Panc1 (cell line): ENCODE measurements at regions of chr4 and their contacts with region 1.

Region 1: DNA sequence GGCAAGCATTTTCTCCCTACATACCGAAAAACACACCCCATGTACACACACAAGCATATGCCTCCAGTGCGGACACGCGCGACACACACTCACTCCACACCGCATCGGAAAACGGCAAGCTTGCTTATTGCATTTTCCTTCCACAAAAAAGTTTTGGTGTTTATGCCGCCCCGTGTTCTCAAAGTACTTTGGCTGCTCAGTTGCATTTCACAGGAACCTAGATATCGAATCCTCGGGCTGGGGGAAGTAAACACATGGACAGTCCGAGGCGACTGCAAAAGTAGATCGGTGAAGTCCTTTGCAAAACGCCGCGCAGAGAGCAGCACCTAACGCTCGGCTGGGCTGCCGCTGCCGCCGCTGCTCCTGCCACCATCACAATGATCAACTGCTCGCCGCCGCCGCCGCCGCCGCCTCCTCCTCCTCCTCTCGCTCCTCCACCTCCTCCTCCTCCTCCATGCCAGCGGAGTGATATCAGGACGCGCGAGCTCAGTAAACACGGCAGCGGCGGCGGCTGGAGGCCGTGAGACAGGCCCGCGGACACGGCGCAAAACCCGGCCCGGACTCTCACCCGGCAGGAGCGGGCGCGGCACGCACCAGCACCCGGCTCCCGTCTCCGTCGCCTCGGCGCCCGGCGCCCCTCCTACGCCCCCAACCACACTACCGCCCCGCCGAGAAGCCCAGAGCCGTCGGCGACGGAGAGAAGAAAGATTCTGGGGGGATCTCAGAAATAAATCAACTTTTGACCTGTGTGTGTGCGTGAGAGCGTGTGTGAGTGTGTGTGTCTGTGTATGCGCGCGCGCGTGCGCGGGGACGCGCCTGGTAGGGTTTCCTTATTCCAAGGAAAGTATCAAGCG is at the start of gene MAML3:
- DNase-seq: no peak
- ATAC-seq: peak; percentile 49
- H3K4me3 ChIP-seq: peak within 1 kb of the TSS; percentile 82 to 95
- H3K27ac ChIP-seq: peak within 1 kb of the TSS; percentile 89
- H3K4me1 ChIP-seq: peaks cover 12% of the 10 kb centered on the region
- H3K27me3 ChIP-seq: no peaks in the 10 kb centered on the region
- CTCF ChIP-seq: no peak
- total RNA-seq, gene MAML3: 7.7 TPM

Region 2: GRCh38 chr4:139934057-139934707 is 219.8 kb before region 1 on chr4:
- CTCF ChIA-PET with region 1: no interaction called
- POLR2A ChIA-PET with region 1: interaction called, 10 read pairs
- in situ Hi-C with region 1: no loop called
- intact Hi-C with region 1: no loop called
- DNase-seq: no peak
- ATAC-seq: no peak
- H3K4me3 ChIP-seq: no peak overlapping the region
- H3K27ac ChIP-seq: no peak overlapping the region
- H3K4me1 ChIP-seq: no peaks in the 10 kb centered on the region
- H3K27me3 ChIP-seq: no peaks in the 10 kb centered on the region
- CTCF ChIP-seq: no peak

Region 3: GRCh38 chr4:140031061-140031460 is 122.9 kb before region 1 on chr4:
- CTCF ChIA-PET with region 1: no interaction called
- POLR2A ChIA-PET with region 1: interaction called, 11 read pairs
- in situ Hi-C with region 1: no loop called
- intact Hi-C with region 1: no loop called
- DNase-seq: no peak
- ATAC-seq: no peak
- H3K4me3 ChIP-seq: no peak overlapping the region
- H3K27ac ChIP-seq: no peak overlapping the region
- H3K4me1 ChIP-seq: peaks cover 4% of the 10 kb centered on the region; the same call in 1 of the 2 replicates
- H3K27me3 ChIP-seq: no peaks in the 10 kb centered on the region
- CTCF ChIP-seq: no peak

Region 4: GRCh38 chr4:140095694-140096482 is 58.1 kb before region 1 on chr4:
- CTCF ChIA-PET with region 1: interaction called, 5 read pairs
- POLR2A ChIA-PET with region 1: interaction called, 28 read pairs
- in situ Hi-C with region 1: no loop called
- intact Hi-C with region 1: loop called (anchors 5 kb)
- DNase-seq: no peak
- ATAC-seq: peak; percentile 72
- H3K4me3 ChIP-seq: peak overlapping the region; percentile 18 to 51
- H3K27ac ChIP-seq: peak overlapping the region; percentile 96
- H3K4me1 ChIP-seq: peaks cover 61% of the 10 kb centered on the region
- H3K27me3 ChIP-seq: no peaks in the 10 kb centered on the region
- CTCF ChIP-seq: no peak

Region 5: DNA sequence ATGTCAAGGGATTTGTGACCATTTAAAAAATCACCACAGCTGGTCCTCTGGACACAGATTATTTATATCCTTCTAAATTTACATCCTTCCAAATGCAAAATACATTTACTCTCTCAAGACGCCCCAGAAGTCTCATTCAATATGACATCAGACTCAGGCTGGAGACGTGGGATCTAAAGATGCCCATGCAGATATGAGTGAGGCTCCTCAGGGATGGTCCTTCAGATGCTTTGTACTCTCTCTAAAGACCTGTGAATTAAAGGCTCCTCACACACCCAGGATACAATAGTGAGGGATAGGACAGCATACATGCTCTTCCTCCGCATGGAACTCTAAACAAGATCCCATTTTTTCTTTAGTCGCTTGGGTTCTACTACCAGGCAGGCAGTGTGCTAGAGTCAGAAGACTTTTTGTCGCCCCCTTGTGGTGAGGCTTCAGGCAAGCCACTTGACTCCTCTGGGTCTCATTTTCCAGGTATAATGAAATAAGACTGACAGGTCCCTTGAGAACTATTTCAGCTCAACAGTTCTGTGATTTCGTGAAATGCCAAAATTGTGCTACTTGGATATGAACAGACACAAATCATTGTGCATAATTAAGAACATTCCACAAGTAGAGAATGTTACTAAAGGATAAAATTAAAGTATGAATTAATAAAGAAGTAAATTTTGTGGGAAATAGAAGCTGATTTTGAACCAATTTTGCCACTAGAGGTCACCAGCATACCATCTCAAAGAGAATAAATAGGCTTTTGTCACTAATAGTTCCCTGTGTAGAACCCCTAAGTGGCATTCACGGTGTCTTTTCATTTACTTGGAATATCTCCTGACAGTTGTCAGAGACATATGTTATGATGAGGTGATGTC is 205.8 kb after region 1 on chr4:
- CTCF ChIA-PET with region 1: no interaction called
- POLR2A ChIA-PET with region 1: no interaction called
- in situ Hi-C with region 1: no loop called
- intact Hi-C with region 1: no loop called
- DNase-seq: peak; percentile 63
- ATAC-seq: peak; percentile 99
- H3K4me3 ChIP-seq: no peak overlapping the region
- H3K27ac ChIP-seq: no peak overlapping the region
- H3K4me1 ChIP-seq: no peaks in the 10 kb centered on the region
- H3K27me3 ChIP-seq: no peaks in the 10 kb centered on the region
- CTCF ChIP-seq: peak; percentile 86

Region 6: DNA sequence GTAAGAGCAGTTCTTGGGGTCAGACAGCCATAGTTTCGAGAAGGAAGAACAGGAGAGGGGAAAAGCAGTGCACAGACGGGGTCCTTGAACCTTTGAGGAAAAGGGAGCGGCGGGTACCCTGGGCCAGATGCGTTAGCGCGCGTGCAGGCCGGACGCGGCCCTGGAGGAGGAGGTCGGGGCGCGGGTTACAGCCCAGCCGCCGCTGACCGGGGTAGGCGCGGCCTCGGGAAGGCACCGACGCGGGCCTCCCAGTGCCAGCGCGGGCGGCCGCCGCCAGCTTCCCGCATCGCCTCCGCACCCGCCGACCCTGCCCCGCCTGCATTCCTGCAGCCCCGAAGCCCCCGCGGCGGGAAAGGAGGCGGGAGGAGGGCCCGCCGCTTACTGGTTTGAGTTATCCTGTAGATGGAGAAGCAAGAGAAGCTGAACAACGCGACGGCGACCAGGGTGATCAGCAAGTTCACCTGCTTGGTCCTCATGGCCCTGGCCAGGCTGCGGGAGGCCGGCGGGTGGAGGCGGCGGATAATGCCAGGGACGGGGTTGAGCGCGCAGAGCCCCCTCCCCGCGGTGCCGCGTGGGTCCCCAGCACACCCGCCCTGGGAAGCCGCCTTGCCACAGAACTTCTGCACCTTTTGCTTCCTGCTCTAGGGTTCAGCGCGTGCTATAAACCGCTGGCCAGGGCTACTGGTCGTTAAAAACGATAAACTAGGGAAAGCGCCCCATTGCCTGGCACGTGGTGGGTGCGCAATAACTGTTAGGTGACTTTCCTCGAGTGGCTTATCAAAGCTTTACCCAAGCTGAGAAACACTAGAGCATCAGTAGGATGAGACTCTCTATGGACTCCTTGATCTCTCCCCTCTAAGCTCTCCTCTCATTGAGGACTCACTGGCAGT is 344.0 kb after region 1 on chr4 and contains the start of gene MGAT4D:
- CTCF ChIA-PET with region 1: no interaction called
- POLR2A ChIA-PET with region 1: no interaction called
- in situ Hi-C with region 1: no loop called
- intact Hi-C with region 1: no loop called
- DNase-seq: no peak
- ATAC-seq: peak; percentile 79
- H3K4me3 ChIP-seq: peak within 1 kb of the TSS; percentile 27 to 38
- H3K27ac ChIP-seq: no peak within 1 kb of the TSS
- H3K4me1 ChIP-seq: no peaks in the 10 kb centered on the region
- H3K27me3 ChIP-seq: peaks cover 16% of the 10 kb centered on the region
- CTCF ChIP-seq: no peak
- total RNA-seq, gene MGAT4D: not detected